Transverse colon (tissue), 4 donors: ENCODE measurements at regions of chr18 and their contacts with region 1.

Region 1: GRCh38 chr18:42192251-42193248 is 237.5 kb downstream of the PIK3C3 start:
- DNase-seq: no peak
- H3K4me3 ChIP-seq: no peak overlapping the region
- H3K27ac ChIP-seq: no peak overlapping the region
- H3K4me1 ChIP-seq: no peaks in the 10 kb centered on the region
- H3K27me3 ChIP-seq: no peaks in the 10 kb centered on the region
- CTCF ChIP-seq: no peak
- EP300 ChIP-seq: no peak
- POLR2A ChIP-seq: no peak

Region 2: GRCh38 chr18:42126586-42126985 is 66.0 kb before region 1 on chr18:
- in situ Hi-C with region 1: no loop called
- intact Hi-C with region 1: no loop called
- DNase-seq: no peak
- H3K4me3 ChIP-seq: no peak overlapping the region
- H3K27ac ChIP-seq: no peak overlapping the region
- H3K4me1 ChIP-seq: peaks cover 0 to 3% (median 0%) of the 10 kb centered on the region in 4 donors
- H3K27me3 ChIP-seq: no peaks in the 10 kb centered on the region
- CTCF ChIP-seq: no peak
- EP300 ChIP-seq: no peak
- POLR2A ChIP-seq: no peak

Region 3: DNA sequence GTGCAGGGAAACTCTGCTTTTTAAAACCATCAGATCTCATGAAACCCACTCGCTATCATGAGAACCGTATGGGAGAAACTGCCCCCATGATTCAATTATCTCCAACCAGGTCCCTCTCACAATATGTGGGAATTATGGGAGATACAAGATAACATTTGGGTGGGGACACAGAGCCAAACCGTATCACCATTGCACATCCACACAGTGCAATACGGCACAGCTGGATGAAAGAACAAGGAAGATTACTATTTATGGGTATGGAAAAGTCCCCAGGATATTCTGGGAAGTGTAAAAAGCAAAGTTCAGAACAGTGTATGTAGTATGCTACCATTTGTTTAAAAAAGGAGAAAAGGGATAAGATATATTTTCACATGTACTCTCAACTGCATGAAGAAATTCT is 52.6 kb after region 1 on chr18:
- in situ Hi-C with region 1: no loop called
- intact Hi-C with region 1: loop called (anchors 2 kb)
- DNase-seq: no peak
- H3K4me3 ChIP-seq: no peak overlapping the region
- H3K27ac ChIP-seq: no peak overlapping the region
- H3K4me1 ChIP-seq: no peaks in the 10 kb centered on the region
- H3K27me3 ChIP-seq: no peaks in the 10 kb centered on the region
- CTCF ChIP-seq: no peak
- EP300 ChIP-seq: no peak
- POLR2A ChIP-seq: no peak